ENCODE measurements at regions of chr11 and their contacts with region 1.

Region 1: DNA sequence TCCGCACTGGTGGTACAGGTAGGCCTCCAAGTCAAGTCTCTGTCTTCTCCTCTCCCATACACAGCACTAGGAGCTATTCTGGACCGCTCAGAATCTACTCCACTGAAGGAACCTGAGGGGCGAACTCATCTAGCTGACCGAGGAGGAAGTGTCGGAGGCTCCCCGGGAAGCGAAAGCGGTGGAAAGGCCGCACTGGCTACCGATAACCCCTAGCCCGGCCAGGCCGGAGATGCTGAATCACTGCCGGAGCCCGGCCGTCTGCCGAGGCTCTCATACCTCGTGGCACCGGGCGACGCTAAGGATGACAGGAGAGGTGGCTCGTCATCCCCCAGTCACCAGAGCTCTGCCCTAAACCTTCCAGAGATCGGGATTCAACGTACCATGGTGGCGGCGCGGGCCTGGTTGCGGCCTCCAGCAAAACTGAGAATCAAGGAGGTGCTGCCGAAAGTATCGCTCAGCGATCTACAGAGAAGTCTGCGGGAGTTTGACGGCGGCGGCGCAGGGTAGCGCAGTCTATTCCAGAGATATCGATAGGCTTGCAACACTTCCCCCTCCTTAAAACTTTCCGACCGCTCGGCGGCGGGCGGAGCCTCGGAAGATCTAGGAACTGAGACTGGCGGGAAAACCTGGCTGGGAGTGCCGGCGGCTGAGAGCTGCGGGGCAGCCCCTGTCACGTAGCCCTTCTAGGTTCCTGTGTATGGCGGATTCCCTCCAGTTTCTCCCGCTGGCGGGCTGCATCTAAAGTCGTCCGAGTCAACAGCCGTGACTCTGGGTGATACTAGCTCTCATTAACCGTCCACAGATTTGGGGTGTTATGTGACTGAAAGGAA is at the start of gene PSMA1:
- DNase-seq: peak; percentile 94
- H3K4me3 Mint-ChIP-seq: peak within 1 kb of the TSS; percentile 91
- H3K27ac Mint-ChIP-seq: peak within 1 kb of the TSS; percentile 98
- H3K4me1 Mint-ChIP-seq: peaks cover 14% of the 10 kb centered on the region
- H3K27me3 Mint-ChIP-seq: no peaks in the 10 kb centered on the region
- CTCF ChIP-seq: no peak
- total RNA-seq, gene PSMA1: 202 and 255 TPM in 2 replicates

Region 2: GRCh38 chr11:13993096-13993765 is 526.9 kb before region 1 on chr11:
- CTCF ChIA-PET with region 1: no interaction called
- POLR2A ChIA-PET with region 1: no interaction called
- intact Hi-C with region 1: no loop called
- DNase-seq: no peak
- H3K4me3 Mint-ChIP-seq: no peak overlapping the region
- H3K27ac Mint-ChIP-seq: no peak overlapping the region
- H3K4me1 Mint-ChIP-seq: no peaks in the 10 kb centered on the region
- H3K27me3 Mint-ChIP-seq: peaks cover 57% of the 10 kb centered on the region
- CTCF ChIP-seq: no peak

Region 3: DNA sequence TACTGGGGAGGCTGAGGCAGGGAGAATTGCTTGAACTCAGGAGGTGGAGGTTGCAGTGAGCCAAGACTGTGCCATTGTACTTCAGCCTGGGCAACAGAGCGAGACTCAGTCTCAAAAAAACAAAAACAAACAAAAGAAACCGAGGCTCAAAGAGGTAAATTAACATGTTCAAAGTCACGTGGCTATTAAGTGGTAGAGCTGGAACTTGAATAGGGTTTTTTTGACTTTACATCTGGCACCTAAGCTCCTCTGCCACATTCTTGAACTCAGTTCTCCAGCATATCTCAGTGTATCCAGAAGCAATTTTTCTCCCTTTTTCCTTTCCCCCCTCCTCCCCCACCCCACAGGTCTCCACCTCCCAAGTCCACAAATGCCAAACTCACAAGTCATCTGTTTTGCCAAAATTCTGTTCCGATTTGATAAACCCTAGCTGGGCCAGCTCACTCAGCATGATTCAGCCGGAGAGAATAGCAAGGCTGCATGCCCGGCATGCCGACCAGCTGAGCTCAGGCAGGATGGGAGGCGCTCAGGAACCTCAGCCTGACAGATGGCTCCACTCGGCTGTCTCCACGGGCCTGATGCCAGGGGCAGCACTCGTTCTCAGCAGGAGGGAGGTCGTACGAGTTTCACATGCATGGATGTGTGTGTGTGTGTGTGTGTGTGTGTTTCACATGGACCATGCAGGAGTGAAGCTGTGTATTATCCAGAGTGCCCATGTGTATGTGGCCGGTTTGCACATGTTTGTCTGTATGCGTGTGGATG is 97.9 kb before region 1 on chr11:
- CTCF ChIA-PET with region 1: no interaction called
- POLR2A ChIA-PET with region 1: no interaction called
- intact Hi-C with region 1: no loop called
- DNase-seq: peak; percentile 91
- H3K4me3 Mint-ChIP-seq: no peak overlapping the region
- H3K27ac Mint-ChIP-seq: no peak overlapping the region
- H3K4me1 Mint-ChIP-seq: peaks cover 17% of the 10 kb centered on the region
- H3K27me3 Mint-ChIP-seq: no peaks in the 10 kb centered on the region
- CTCF ChIP-seq: no peak

Region 4: GRCh38 chr11:14499554-14500180 is 20.5 kb before region 1 on chr11 and contains the start of gene COPB1:
- CTCF ChIA-PET with region 1: no interaction called
- POLR2A ChIA-PET with region 1: interaction called, 43 read pairs
- intact Hi-C with region 1: no loop called
- DNase-seq: peak; percentile 93
- H3K4me3 Mint-ChIP-seq: peak within 1 kb of the TSS; percentile 76
- H3K27ac Mint-ChIP-seq: peak within 1 kb of the TSS; percentile 95
- H3K4me1 Mint-ChIP-seq: peaks cover 28% of the 10 kb centered on the region
- H3K27me3 Mint-ChIP-seq: no peaks in the 10 kb centered on the region
- CTCF ChIP-seq: no peak
- total RNA-seq, gene COPB1: 159 and 180 TPM in 2 replicates

Region 5: DNA sequence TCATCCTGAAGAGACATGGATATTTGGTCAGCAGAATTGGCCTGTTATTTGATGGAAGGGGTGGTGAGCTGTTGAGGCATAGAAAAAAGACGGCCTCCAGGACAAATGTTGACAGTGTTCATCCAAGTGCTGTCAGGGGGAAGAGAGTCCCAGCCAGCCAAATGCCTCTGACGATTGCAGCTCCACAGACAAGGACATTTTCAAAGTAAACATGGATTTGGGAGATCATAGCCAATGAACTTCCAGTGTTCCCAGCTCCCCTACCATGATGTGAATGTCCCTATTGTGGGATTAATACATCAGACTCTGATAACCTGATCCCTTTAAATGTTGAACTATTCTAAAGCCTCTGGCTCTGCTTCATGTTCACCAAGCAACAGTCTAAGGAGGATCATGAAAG is 31.2 kb after region 1 on chr11:
- CTCF ChIA-PET with region 1: no interaction called
- POLR2A ChIA-PET with region 1: no interaction called
- intact Hi-C with region 1: no loop called
- DNase-seq: no peak
- H3K4me3 Mint-ChIP-seq: no peak overlapping the region
- H3K27ac Mint-ChIP-seq: no peak overlapping the region
- H3K4me1 Mint-ChIP-seq: no peaks in the 10 kb centered on the region
- H3K27me3 Mint-ChIP-seq: peaks cover 63% of the 10 kb centered on the region
- CTCF ChIP-seq: no peak

Region 6: GRCh38 chr11:14625586-14626205 is 105.6 kb after region 1 on chr11:
- CTCF ChIA-PET with region 1: no interaction called
- POLR2A ChIA-PET with region 1: no interaction called
- intact Hi-C with region 1: no loop called
- DNase-seq: no peak
- H3K4me3 Mint-ChIP-seq: no peak overlapping the region
- H3K27ac Mint-ChIP-seq: no peak overlapping the region
- H3K4me1 Mint-ChIP-seq: no peaks in the 10 kb centered on the region
- H3K27me3 Mint-ChIP-seq: peaks cover 17% of the 10 kb centered on the region
- CTCF ChIP-seq: no peak

Region 7: DNA sequence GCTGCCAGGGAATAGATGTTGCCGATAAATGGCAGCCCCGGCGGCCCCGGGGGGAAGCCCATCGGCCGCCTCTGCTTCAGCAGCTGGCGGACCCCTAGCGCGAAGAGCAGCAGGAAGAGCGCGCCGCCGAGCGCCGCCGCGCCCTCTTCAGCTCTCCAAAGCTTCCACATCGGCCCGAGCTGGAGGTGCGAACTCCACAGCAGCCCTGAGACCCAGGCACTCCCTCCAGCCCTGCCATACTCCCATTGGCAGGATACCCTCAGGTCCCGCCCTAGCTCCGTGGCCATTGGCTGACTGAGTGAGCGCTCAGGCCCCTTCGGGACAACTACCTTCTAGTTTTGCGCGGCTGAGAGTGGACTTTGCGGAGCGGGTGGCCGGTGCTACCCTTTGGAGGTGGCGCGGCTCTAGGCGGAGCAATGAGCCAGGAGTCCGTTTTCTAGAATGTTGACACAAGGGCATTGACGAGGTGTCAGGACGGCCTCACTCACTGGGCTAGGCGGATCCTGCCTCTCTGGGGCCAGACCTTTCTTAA is 372.0 kb after region 1 on chr11 and contains the start of gene CYP2R1:
- CTCF ChIA-PET with region 1: interaction called, 11 read pairs
- POLR2A ChIA-PET with region 1: interaction called, 17 read pairs
- intact Hi-C with region 1: loop called (anchors 5 kb)
- DNase-seq: peak; percentile 99
- H3K4me3 Mint-ChIP-seq: peak within 1 kb of the TSS; percentile 94
- H3K27ac Mint-ChIP-seq: peak within 1 kb of the TSS; percentile 77
- H3K4me1 Mint-ChIP-seq: peaks cover 34% of the 10 kb centered on the region
- H3K27me3 Mint-ChIP-seq: no peaks in the 10 kb centered on the region
- CTCF ChIP-seq: no peak
- total RNA-seq, gene CYP2R1: 20.5 and 22.0 TPM in 2 replicates

Measured in MCF 10A (cell line).